B cell (primary cell): ENCODE measurements at regions of chr13 and their contacts with region 1.

Region 1: DNA sequence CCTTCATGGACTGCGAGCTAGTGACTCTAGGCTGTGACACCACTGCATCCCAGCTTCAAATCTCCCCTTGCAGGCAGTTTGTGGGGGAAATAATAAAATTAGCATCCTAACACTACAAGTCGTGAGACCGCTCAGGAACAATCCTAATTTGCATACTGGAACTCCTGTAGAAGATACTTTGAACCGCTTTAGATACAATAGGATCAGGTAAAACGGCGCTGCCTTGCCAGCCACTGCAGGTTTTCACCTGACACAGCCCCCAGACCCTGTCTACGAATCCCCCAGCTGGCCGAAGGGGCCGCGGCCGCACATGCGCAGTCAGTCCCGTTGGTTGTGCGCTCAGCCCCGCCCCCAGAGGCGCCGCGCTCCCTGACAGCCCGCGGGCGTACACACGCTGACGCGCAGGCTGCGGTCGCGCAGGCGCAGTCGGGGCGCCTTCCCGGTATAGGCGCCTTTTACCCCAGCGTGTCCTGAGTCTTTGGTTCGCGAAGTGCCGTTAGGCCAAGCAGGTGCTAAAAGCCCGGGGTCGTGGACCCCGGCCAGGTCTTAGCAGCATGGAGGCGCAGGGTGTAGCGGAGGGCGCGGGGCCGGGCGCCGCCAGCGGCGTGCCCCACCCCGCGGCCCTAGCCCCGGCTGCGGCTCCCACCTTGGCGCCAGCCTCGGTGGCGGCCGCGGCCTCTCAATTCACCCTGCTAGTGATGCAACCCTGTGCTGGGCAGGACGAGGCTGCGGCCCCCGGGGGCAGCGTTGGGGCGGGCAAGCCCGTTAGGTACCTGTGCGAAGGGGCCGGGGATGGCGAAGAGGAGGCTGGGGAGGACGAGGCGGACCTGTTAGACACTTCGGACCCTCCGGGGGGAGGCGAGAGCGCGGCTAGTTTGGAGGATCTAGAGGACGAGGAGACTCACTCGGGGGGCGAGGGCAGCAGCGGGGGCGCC is at the start of gene RFXAP:
- DNase-seq: peak; percentile 95
- ATAC-seq: peak; percentile 93
- H3K4me3 ChIP-seq: peak within 1 kb of the TSS; percentile 54 to 96 (median 69)
- H3K4me3 Mint-ChIP-seq: peak within 1 kb of the TSS; percentile 97
- H3K27ac ChIP-seq: peak within 1 kb of the TSS; percentile 45 to 79
- H3K27ac Mint-ChIP-seq: peak within 1 kb of the TSS; percentile 91
- H3K4me1 ChIP-seq: peaks cover 19 to 22% of the 10 kb centered on the region in 2 donors
- H3K4me1 Mint-ChIP-seq: peaks cover 47% of the 10 kb centered on the region
- H3K27me3 ChIP-seq: peaks cover 0 to 5% (median 2%) of the 10 kb centered on the region in 4 experiments
- H3K27me3 Mint-ChIP-seq: peaks cover 11% of the 10 kb centered on the region
- CTCF ChIP-seq: peak; percentile 21
- total RNA-seq, gene RFXAP: 9.6 and 13.5 TPM in 2 replicates

Region 2: GRCh38 chr13:34941835-34942731 is 1877.0 kb before region 1 on chr13 and contains the start of gene NBEA:
- CTCF ChIA-PET with region 1: no interaction called
- POLR2A ChIA-PET with region 1: no interaction called
- intact Hi-C with region 1: loop called (anchors 5 kb)
- DNase-seq: peak; percentile 89
- ATAC-seq: peak; percentile 80
- H3K4me3 ChIP-seq: peak within 1 kb of the TSS; percentile 39 to 81 (median 71)
- H3K4me3 Mint-ChIP-seq: peak within 1 kb of the TSS; percentile 95
- H3K27ac ChIP-seq: peak within 1 kb of the TSS in 1 of 2 donors; percentile 65
- H3K27ac Mint-ChIP-seq: peak within 1 kb of the TSS; percentile 88
- H3K4me1 ChIP-seq: peaks cover 20 to 25% of the 10 kb centered on the region in 2 donors
- H3K4me1 Mint-ChIP-seq: peaks cover 30% of the 10 kb centered on the region
- H3K27me3 ChIP-seq: peaks cover 0 to 8% (median 6%) of the 10 kb centered on the region in 4 experiments
- H3K27me3 Mint-ChIP-seq: peaks cover 24% of the 10 kb centered on the region
- CTCF ChIP-seq: peak; percentile 19
- total RNA-seq, gene NBEA: 10.3 and 10.7 TPM in 2 replicates

Region 3: DNA sequence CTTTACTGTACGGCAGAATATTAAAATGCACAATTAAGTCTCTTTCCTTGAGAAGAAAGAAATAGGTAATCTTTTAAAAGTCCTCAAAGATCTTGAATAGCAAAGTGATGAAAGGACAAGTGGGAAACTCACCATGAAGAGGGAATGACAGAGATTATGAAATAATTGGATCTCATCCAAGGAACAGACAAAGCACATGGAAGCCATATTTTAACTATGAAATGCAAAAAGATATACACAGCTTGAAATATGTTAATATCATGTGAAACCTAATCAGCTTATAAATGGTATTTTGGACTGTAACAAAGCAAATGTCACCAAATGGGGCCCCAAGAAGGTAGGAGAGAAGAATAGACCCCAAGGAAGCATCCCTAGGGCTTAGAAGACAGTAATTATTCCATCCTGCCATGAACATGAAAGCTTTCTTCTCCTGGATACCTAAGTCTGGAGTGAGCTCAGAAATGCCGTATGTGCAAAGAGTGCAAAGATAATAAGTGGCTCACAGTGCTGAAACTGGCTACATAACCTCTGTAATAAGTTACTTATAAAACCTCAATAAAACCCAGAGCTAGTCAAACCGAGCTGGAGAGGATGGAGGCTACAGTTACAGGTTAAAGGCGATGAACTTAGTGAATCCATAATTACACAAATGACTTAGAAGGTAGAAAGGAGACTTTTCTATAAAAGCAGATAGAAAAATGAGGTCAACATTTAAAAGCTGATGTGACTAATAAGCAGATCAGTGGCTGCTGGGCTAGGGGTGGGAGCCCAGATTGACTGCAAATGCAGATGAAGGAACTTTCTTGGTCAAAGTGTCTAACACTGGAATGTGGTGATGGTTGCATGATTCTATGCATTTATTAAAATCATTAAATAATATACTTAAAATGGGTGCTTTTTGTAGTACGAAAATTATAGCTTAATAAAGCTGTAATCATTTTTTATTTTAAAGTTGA is 722.3 kb before region 1 on chr13:
- CTCF ChIA-PET with region 1: no interaction called
- POLR2A ChIA-PET with region 1: no interaction called
- intact Hi-C with region 1: no loop called
- DNase-seq: no peak
- ATAC-seq: no peak
- H3K4me3 ChIP-seq: no peak overlapping the region
- H3K4me3 Mint-ChIP-seq: no peak overlapping the region
- H3K27ac ChIP-seq: no peak overlapping the region
- H3K27ac Mint-ChIP-seq: no peak overlapping the region
- H3K4me1 ChIP-seq: no peaks in the 10 kb centered on the region
- H3K4me1 Mint-ChIP-seq: no peaks in the 10 kb centered on the region
- H3K27me3 ChIP-seq: no peaks in the 10 kb centered on the region
- H3K27me3 Mint-ChIP-seq: no peaks in the 10 kb centered on the region
- CTCF ChIP-seq: no peak

Region 4: DNA sequence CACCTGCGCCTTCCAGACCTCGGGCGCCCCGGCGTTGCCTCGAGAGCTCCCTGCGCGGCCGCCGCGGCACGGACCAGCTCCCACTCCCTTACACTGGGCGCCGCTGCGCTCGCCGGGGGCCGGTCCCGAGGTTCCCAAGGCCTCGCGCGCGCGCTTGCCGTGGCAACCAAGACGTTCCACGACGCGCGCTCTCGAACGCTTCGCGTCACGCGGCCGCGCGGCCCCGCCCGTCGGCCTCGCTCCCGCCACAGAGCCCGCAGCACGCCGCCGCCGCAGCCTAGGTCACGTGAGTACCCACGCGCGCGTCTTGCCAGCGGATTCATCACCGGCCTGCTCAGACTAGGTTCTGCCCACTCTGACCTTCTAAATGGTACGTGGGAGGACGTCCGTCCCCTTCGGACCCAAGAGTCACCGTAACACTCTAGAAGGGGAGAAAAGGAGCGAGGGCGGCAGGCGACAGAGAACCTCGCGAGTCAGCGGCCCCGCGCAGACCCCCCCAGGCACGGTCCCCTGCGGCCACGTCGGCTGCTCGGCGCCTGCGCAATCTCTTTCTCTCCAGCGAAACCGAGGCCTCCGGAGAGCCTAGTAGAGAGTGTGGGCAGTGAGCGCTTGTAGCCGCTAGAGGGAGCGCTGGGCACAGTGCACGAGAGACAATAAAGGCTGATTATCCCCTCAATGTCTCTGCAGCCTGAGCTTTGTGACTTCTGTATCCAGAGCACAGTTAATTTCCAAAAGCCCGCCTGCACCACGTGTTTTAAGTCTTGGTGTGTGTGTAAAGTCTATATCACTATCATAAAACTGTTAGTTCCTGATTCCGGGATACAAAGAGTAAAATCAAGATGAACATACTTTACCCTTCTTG is 472.6 kb before region 1 on chr13 and contains the start of gene SPART:
- CTCF ChIA-PET with region 1: interaction called, 3 read pairs
- POLR2A ChIA-PET with region 1: no interaction called
- intact Hi-C with region 1: loop called (anchors 1 kb)
- DNase-seq: peak; percentile 92
- ATAC-seq: peak; percentile 85
- H3K4me3 ChIP-seq: peak within 1 kb of the TSS; percentile 64 to 98 (median 85)
- H3K4me3 Mint-ChIP-seq: peak within 1 kb of the TSS; percentile 95
- H3K27ac ChIP-seq: peak within 1 kb of the TSS; percentile 93 to 96
- H3K27ac Mint-ChIP-seq: peak within 1 kb of the TSS; percentile 96
- H3K4me1 ChIP-seq: peaks cover 10 to 16% of the 10 kb centered on the region in 2 donors
- H3K4me1 Mint-ChIP-seq: peaks cover 24% of the 10 kb centered on the region
- H3K27me3 ChIP-seq: no peaks in the 10 kb centered on the region
- H3K27me3 Mint-ChIP-seq: peaks cover 14% of the 10 kb centered on the region
- CTCF ChIP-seq: peak; percentile 88
- total RNA-seq, gene SPART: 18.6 and 20.8 TPM in 2 replicates

Region 5: GRCh38 chr13:36758345-36758744 is 60.7 kb before region 1 on chr13:
- CTCF ChIA-PET with region 1: no interaction called
- POLR2A ChIA-PET with region 1: no interaction called
- intact Hi-C with region 1: no loop called
- DNase-seq: no peak
- ATAC-seq: no peak
- H3K4me3 ChIP-seq: no peak overlapping the region
- H3K4me3 Mint-ChIP-seq: no peak overlapping the region
- H3K27ac ChIP-seq: no peak overlapping the region
- H3K27ac Mint-ChIP-seq: no peak overlapping the region
- H3K4me1 ChIP-seq: no peaks in the 10 kb centered on the region
- H3K4me1 Mint-ChIP-seq: no peaks in the 10 kb centered on the region
- H3K27me3 ChIP-seq: peaks cover 0 to 8% (median 0%) of the 10 kb centered on the region in 4 experiments
- H3K27me3 Mint-ChIP-seq: peaks cover 34% of the 10 kb centered on the region
- CTCF ChIP-seq: no peak

Region 6: GRCh38 chr13:36999054-36999714 is 180.1 kb after region 1 on chr13 and contains the start of gene ALG5:
- CTCF ChIA-PET with region 1: no interaction called
- POLR2A ChIA-PET with region 1: interaction called, 5 read pairs
- intact Hi-C with region 1: loop called (anchors 1 kb)
- DNase-seq: peak; percentile 94
- ATAC-seq: peak; percentile 76
- H3K4me3 ChIP-seq: peak within 1 kb of the TSS; percentile 89 to 100 (median 97)
- H3K4me3 Mint-ChIP-seq: peak within 1 kb of the TSS; percentile 100
- H3K27ac ChIP-seq: peak within 1 kb of the TSS; percentile 97 to 98
- H3K27ac Mint-ChIP-seq: peak within 1 kb of the TSS; percentile 100
- H3K4me1 ChIP-seq: peaks cover 15 to 16% of the 10 kb centered on the region in 2 donors
- H3K4me1 Mint-ChIP-seq: peaks cover 38% of the 10 kb centered on the region
- H3K27me3 ChIP-seq: no peaks in the 10 kb centered on the region
- H3K27me3 Mint-ChIP-seq: no peaks in the 10 kb centered on the region
- CTCF ChIP-seq: peak; percentile 98
- total RNA-seq, gene ALG5: 16.4 and 21.0 TPM in 2 replicates

Region 7: GRCh38 chr13:38349390-38350113 is 1530.5 kb after region 1 on chr13 and contains the start of gene UFM1:
- CTCF ChIA-PET with region 1: no interaction called
- POLR2A ChIA-PET with region 1: no interaction called
- intact Hi-C with region 1: loop called (anchors 2 kb)
- DNase-seq: peak; percentile 95
- ATAC-seq: peak; percentile 96
- H3K4me3 ChIP-seq: peak within 1 kb of the TSS; percentile 74 to 98 (median 92)
- H3K4me3 Mint-ChIP-seq: peak within 1 kb of the TSS; percentile 99
- H3K27ac ChIP-seq: peak within 1 kb of the TSS; percentile 92 to 93
- H3K27ac Mint-ChIP-seq: peak within 1 kb of the TSS; percentile 98
- H3K4me1 ChIP-seq: peaks cover 21 to 22% of the 10 kb centered on the region in 2 donors
- H3K4me1 Mint-ChIP-seq: peaks cover 38% of the 10 kb centered on the region
- H3K27me3 ChIP-seq: no peaks in the 10 kb centered on the region
- H3K27me3 Mint-ChIP-seq: no peaks in the 10 kb centered on the region
- CTCF ChIP-seq: no peak
- total RNA-seq, gene UFM1: 61.6 and 66.4 TPM in 2 replicates